ENCODE measurements at regions of chr10 and their contacts with region 1.

Region 1: DNA sequence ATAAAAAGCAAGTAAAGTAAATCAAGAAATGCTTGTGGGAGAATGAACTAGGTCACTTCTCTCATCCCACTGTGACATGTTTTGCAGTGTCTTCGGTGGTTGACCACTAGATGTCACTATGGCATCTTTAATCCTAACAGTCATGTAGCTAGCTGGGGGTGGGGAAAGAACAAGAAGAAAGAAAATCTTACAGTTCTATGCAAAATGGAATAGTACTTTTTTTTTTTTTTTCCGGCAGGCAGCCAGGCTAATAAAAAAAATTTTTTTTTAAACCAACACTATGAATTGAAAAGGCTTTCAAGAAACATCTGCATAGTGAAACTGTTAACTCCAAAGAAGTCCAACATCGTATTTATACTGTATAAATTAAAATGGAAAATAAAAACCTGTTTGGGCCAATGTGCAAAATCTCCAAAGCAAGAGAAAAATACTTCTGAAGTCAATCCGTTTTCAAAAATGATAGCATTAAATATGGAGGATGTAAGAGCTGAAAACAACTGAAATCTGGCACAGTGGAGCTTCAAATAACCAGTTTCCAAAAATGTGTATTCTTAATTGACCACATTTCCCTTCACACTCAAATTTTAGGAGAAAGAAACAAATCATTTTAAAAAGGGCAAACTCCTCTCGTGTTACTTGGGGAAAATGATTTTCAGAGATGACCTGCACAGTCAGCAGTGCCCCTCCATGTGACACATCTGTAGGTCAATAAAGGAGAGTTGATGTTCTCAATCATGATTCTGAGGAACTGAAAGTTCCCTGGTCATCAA is 38.5 kb downstream of the CDK1 start:
- DNase-seq: peak; percentile 71
- ATAC-seq: peak; percentile 89
- H3K4me3 ChIP-seq: no peak overlapping the region
- H3K27ac ChIP-seq: no peak overlapping the region
- H3K4me1 ChIP-seq: no peaks in the 10 kb centered on the region
- H3K27me3 ChIP-seq: no peaks in the 10 kb centered on the region
- CTCF ChIP-seq: peak; percentile 86
- EP300 ChIP-seq: no peak
- POLR2A ChIP-seq: no peak
- RAD21 ChIP-seq: peak; percentile 52

Region 2: DNA sequence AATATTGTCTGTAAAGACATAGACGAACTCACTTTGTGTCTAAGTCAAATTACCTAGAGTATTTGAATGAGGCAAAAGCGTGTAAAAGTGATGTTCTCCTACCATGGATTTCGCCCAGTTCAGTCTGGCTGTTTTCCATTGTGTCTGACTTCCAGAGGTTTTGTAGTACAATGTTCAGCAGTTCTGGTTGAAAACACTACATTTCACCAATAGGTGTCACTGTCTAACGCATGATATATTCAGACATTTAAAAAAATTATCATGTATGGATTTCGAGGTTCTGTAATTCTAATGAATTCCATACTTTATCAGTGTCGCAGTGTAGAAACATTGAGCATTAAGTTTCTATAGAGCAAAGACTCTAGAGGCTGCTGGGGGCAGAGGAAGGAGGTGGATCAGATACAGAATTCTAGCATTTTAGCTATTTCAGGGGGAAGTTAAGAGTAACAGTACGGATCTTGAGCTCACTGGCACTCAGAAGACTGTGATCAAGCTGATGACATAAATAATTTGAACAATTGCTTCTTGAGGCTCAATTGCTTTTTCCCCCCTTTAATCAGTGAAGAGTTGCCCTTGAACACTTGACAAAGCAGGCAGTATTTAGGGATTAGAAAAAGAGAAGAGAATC is 324.1 kb after region 1 on chr10:
- CTCF ChIA-PET with region 1: no interaction called
- POLR2A ChIA-PET with region 1: no interaction called
- in situ Hi-C with region 1: no loop called
- intact Hi-C with region 1: loop called (anchors 10 kb)
- DNase-seq: peak; percentile 68
- ATAC-seq: peak; percentile 84
- H3K4me3 ChIP-seq: no peak overlapping the region; a peak in 1 of 6 replicates
- H3K27ac ChIP-seq: no peak overlapping the region
- H3K4me1 ChIP-seq: peaks cover 20% of the 10 kb centered on the region
- H3K27me3 ChIP-seq: no peaks in the 10 kb centered on the region
- CTCF ChIP-seq: peak; percentile 74
- EP300 ChIP-seq: no peak
- POLR2A ChIP-seq: no peak
- RAD21 ChIP-seq: 0 out of 2 replicates have a peak, but pooled peaks have one; percentile 31

Region 3: GRCh38 chr10:61284222-61284890 is 467.5 kb after region 1 on chr10:
- CTCF ChIA-PET with region 1: interaction called, 26 read pairs
- POLR2A ChIA-PET with region 1: no interaction called
- in situ Hi-C with region 1: loop called (anchors 5 kb)
- intact Hi-C with region 1: loop called (anchors 1 kb)
- DNase-seq: peak; percentile 53
- ATAC-seq: 0 out of 3 replicates have a peak, but pooled peaks have one; percentile 23
- H3K4me3 ChIP-seq: no peak overlapping the region
- H3K27ac ChIP-seq: no peak overlapping the region
- H3K4me1 ChIP-seq: no peaks in the 10 kb centered on the region
- H3K27me3 ChIP-seq: 0 out of 5 replicates have a peak, but pooled peaks cover 0 to 2% of the 10 kb centered on the region in 2 experiments
- CTCF ChIP-seq: peak; percentile 72
- EP300 ChIP-seq: no peak
- POLR2A ChIP-seq: no peak
- RAD21 ChIP-seq: 0 out of 2 replicates have a peak, but pooled peaks have one; percentile 18

Region 4: DNA sequence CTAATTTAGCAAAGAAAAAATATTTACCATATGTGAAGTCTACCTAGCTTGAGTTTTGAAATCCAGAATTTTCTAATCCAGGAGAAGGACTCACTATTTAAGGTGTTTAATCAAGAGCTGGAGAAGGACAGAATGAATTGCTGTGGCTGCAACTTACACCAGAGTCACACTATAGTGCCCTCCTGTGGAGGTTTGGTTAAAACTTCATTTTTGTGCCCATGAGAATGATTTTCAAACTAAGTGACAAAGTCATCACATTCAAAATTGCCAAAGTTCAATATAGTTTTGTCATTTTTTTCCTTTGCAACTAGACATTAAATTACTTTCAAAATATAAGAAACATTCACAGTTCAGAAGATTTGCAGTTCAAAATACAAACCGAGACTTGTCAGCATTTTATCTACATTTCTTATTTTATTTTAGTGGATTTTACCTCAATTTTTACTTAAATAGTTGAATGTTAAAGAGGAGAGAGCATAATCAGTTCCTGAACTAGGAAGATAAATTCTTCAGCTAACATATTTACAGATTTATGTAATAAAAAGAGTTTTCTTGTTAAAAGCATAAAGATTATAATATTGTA is 916.6 kb after region 1 on chr10:
- CTCF ChIA-PET with region 1: no interaction called
- POLR2A ChIA-PET with region 1: no interaction called
- in situ Hi-C with region 1: loop called (anchors 10 kb)
- intact Hi-C with region 1: loop called (anchors 2 kb)
- DNase-seq: peak; percentile 33
- ATAC-seq: peak; percentile 53; the same call in 2 of the 3 replicates
- H3K4me3 ChIP-seq: no peak overlapping the region
- H3K27ac ChIP-seq: no peak overlapping the region
- H3K4me1 ChIP-seq: no peaks in the 10 kb centered on the region
- H3K27me3 ChIP-seq: peaks cover 0 to 1% of the 10 kb centered on the region in 2 experiments; a peak in 1 of 5 replicates
- CTCF ChIP-seq: peak; percentile 58
- EP300 ChIP-seq: no peak
- POLR2A ChIP-seq: no peak
- RAD21 ChIP-seq: no peak

Measured in HepG2 (cell line).